WTC11 (cell line): ENCODE measurements at regions of chr5 and their contacts with region 1.

Region 1: DNA sequence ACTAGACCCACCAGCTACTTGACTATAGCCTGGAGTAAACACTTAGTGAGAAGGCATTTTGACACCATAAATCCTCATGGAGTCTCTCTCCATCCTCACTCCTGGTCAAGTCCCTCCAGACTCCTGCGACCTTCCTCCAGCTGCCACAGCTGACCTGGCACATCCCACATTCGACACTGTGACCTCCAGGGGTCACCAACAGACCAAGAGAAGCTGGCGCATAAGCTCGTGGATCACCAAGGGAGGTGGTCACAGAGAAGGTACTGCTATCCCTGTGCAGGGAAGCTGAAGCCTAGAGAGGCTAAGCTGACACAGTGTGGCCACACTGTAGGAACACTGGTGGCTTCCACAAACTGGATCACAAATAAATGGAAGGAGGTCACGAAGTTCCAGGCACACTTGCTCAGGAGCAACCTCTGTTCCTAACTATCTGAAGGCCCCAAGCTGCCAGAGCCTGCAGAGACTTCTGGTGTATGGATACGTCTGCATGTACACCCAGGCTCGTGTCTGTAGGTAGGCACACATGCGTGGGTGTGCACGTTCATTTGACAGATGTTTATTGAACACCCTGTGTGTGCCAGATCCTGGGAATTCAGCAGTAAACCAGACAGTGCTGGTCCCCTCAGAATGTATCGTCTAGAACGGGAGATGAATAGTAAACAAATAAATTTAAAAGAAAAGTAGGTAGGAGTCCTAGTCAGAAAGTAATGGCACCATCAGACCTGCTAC is 104.4 kb downstream of the C5orf15 start:
- DNase-seq: no peak
- ATAC-seq: peak; percentile 58
- H3K4me3 Mint-ChIP-seq: no peak overlapping the region
- H3K27ac Mint-ChIP-seq: no peak overlapping the region
- H3K4me1 Mint-ChIP-seq: no peaks in the 10 kb centered on the region
- H3K27me3 Mint-ChIP-seq: peaks cover 4% of the 10 kb centered on the region
- CTCF ChIP-seq: no peak

Region 2: DNA sequence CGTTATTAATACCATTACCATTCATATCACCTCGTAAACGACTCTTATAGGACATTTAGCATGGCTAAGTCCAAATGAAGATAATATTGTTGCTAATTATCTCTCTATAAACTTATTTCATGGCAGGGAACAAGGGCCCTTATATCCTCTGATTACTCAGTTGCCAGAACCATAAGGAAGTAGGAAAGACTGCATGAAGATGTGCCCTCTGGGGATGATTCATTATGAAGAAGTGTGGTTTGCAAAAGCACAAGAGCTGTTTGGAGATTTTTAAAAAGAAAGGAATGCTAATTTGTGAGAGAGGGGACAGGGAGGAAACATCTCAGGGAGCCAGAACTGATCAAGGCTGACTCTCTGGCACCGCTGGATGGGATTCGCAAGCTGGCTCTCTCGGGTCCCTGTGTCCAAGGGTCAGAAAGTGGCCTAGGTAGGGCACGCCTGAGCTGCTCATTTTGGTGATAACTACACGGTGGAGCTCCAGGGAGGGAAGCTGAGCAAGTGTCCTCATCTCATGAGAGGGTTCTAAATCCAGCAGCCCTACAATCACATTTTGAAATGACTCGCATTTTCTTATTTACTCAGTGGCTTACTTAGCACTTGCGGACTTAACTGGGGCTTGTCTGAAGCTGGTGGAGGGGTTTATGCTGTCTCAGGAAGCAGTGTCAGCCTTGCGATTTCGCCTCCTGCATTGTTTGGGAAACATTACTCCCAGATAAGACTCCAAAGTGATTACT is 32.4 kb before region 1 on chr5:
- CTCF ChIA-PET with region 1: no interaction called
- POLR2A ChIA-PET with region 1: no interaction called
- DNase-seq: no peak
- ATAC-seq: no peak
- H3K4me3 Mint-ChIP-seq: no peak overlapping the region
- H3K27ac Mint-ChIP-seq: no peak overlapping the region
- H3K4me1 Mint-ChIP-seq: no peaks in the 10 kb centered on the region
- H3K27me3 Mint-ChIP-seq: no peaks in the 10 kb centered on the region
- CTCF ChIP-seq: no peak

Region 3: DNA sequence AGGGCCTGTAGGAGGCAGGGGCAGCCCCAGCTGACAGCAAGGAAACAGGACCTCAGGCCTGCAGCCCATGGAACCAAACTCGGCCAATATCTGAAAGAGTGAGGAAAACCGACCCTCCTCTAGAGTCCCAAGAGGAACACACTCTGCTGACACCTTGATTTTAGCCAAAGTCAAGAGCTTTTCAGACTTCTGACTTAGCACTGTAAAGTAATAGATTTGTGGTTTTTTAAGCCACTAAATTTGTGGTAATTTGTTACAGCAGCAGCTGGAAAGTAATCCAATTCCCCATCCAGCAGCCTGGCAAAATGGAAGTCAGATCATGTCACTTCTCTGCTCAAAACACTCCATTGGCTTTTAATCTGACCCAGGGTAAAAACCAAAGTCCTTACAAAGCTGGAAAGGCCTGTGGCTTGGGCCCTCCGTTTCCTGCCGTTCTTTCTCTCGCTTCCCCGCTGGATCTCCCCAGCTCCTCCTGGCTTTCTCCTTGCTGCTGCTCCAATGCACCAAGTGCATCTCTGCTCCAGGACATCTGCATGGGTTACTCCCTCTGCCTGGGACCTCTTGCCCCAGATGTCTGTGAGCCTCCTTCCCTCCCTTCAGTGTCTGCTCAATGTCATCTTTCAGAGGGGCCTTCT is 25.4 kb after region 1 on chr5:
- CTCF ChIA-PET with region 1: no interaction called
- POLR2A ChIA-PET with region 1: no interaction called
- DNase-seq: no peak
- ATAC-seq: no peak
- H3K4me3 Mint-ChIP-seq: no peak overlapping the region
- H3K27ac Mint-ChIP-seq: 0 out of 2 replicates have a peak overlapping the region, but pooled peaks have one; percentile 36
- H3K4me1 Mint-ChIP-seq: no peaks in the 10 kb centered on the region
- H3K27me3 Mint-ChIP-seq: no peaks in the 10 kb centered on the region; the same call in 1 of the 2 replicates
- CTCF ChIP-seq: no peak

Region 4: DNA sequence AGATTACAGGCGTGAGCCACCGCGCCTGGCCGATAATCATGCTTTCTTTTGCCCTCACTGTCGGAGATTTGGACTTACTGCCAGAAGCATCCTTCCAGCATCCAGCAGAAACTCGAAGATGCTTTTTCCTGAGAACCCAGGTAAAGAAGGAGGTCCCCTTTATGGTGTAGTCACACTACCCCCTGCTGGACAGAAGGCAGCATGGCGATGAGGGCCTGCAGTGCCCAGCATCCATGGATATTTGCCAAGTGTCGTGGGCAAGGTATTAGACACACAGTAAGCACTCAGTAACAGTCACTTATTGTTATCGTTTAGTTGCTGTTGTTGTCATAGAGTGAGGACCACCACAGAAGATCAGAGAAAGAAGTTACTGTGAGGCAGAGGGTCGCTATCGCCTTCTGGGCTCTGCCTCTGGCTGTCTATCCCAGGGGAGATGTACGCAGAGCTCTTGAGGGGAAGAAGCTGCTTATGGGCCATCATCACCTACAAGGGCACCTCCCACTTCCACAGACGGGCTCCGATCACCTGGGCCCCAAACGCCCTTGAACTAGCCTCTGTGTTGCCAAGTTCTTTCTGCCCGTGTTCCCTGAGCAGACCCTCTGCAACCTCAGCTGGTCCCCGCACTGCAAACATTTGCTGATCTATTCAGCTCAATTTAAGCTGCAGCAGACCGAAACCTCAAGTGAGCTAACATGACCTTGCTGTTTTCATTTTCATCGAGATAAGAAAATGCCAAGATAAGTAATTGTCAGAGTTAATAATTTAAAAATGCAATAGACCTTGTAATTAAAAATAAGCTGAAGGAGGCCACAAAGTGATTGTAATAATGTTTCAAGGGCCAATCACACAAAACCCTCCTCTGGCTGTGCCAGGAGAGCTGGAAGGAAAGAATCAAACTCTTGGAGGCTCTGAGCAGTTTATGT is 80.5 kb after region 1 on chr5:
- CTCF ChIA-PET with region 1: interaction called, 16 read pairs
- POLR2A ChIA-PET with region 1: no interaction called
- DNase-seq: peak; percentile 74
- ATAC-seq: peak; percentile 95
- H3K4me3 Mint-ChIP-seq: no peak overlapping the region
- H3K27ac Mint-ChIP-seq: no peak overlapping the region
- H3K4me1 Mint-ChIP-seq: peaks cover 3% of the 10 kb centered on the region; the same call in 1 of the 2 replicates
- H3K27me3 Mint-ChIP-seq: no peaks in the 10 kb centered on the region
- CTCF ChIP-seq: peak; percentile 74